ENCODE measurements at regions of chr1 and their contacts with region 1.

Region 1: GRCh38 chr1:93615582-93616150 is 66.0 kb downstream of the BCAR3 start:
- DNase-seq: peak; percentile 77
- ATAC-seq: peak; percentile 9
- H3K4me3 ChIP-seq: peak overlapping the region in 1 of 3 experiments; percentile 2; a peak in 1 of 6 replicates
- H3K27ac ChIP-seq: peak overlapping the region; percentile 100
- H3K4me1 ChIP-seq: peaks cover 87% of the 10 kb centered on the region
- H3K27me3 ChIP-seq: no peaks in the 10 kb centered on the region
- CTCF ChIP-seq: no peak; the same call in 1 of the 2 replicates
- EP300 ChIP-seq: peak in 1 of 2 experiments; percentile 51; a peak in 2 of 4 replicates
- POLR2A ChIP-seq: no peak; a peak in 1 of 4 replicates
- RAD21 ChIP-seq: no peak

Region 2: DNA sequence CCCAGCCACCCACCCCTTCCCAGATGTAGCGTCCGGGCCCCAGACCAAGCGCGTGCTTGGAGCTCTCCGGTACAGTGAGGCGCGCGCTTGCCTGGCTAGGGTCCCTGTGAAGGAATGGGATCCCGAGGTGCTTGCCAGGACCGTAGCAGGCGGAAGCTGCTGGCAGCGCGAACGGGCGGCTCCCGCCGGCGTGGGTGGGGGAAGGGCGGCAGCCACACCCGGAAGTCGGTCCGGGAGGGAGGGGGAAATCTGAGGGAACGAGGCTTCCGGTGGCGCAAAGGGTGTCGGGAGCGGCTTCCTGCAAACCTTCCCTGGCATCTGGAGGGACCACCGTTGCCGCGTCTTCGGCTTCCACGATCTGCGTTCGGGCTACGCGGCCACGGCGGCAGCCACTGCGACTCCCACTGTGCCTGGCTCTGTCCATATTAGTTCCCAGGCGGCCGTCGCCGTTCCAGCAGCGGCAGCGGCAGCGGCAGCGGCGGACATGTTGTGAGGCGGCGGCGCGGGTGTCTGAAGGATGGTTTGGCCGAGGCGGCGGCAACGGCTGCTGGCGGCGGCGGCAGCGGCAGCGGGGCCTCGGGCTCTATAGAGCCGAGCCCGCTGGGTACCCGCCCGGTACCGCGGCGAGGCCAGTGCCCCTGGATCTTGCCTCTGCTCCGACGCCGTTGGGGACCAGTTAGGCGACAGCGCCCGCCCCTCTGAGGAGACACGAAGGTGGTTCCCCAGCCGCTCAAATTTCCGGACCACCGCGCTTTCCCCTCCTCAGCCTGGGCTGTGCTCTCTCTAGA is 269.8 kb before region 1 on chr1 and contains the start of gene DR1:
- CTCF ChIA-PET with region 1: no interaction called
- POLR2A ChIA-PET with region 1: interaction called, 19 read pairs
- in situ Hi-C with region 1: no loop called
- intact Hi-C with region 1: loop called (anchors 5 kb)
- DNase-seq: peak; percentile 85
- ATAC-seq: peak; percentile 94
- H3K4me3 ChIP-seq: peak within 1 kb of the TSS; percentile 81 to 99 (median 93)
- H3K27ac ChIP-seq: peak within 1 kb of the TSS; percentile 94
- H3K4me1 ChIP-seq: peaks cover 35% of the 10 kb centered on the region
- H3K27me3 ChIP-seq: no peaks in the 10 kb centered on the region; a peak in 1 of 5 replicates
- CTCF ChIP-seq: no peak; the same call in 1 of the 2 replicates
- EP300 ChIP-seq: peak in 1 of 2 experiments; percentile 70; a peak in 2 of 4 replicates
- POLR2A ChIP-seq: peak; percentile 89 to 92
- RAD21 ChIP-seq: peak; percentile 45; the same call in 1 of the 2 replicates
- total RNA-seq, gene DR1: 42.3 and 54.7 TPM in 2 replicates

Region 3: GRCh38 chr1:93447516-93448291 is 168.0 kb before region 1 on chr1 and contains the start of gene FNBP1L:
- CTCF ChIA-PET with region 1: no interaction called
- POLR2A ChIA-PET with region 1: interaction called, 30 read pairs
- in situ Hi-C with region 1: loop called (anchors 5 kb)
- intact Hi-C with region 1: loop called (anchors 2 kb)
- DNase-seq: peak; percentile 65
- ATAC-seq: peak; percentile 90
- H3K4me3 ChIP-seq: peak within 1 kb of the TSS; percentile 87 to 99 (median 99)
- H3K27ac ChIP-seq: peak within 1 kb of the TSS; percentile 90
- H3K4me1 ChIP-seq: peaks cover 31% of the 10 kb centered on the region
- H3K27me3 ChIP-seq: no peaks in the 10 kb centered on the region; a peak in 1 of 5 replicates
- CTCF ChIP-seq: no peak
- EP300 ChIP-seq: no peak
- POLR2A ChIP-seq: peak; percentile 72 to 85
- RAD21 ChIP-seq: no peak
- total RNA-seq, gene FNBP1L: 27.1 and 41.3 TPM in 2 replicates

Region 4: GRCh38 chr1:93579891-93580290 is 35.8 kb before region 1 on chr1:
- CTCF ChIA-PET with region 1: no interaction called
- POLR2A ChIA-PET with region 1: interaction called, 56 read pairs
- in situ Hi-C with region 1: no loop called
- intact Hi-C with region 1: no loop called
- DNase-seq: peak; percentile 64
- ATAC-seq: peak; percentile 82
- H3K4me3 ChIP-seq: no peak overlapping the region
- H3K27ac ChIP-seq: peak overlapping the region; percentile 50
- H3K4me1 ChIP-seq: peaks cover 45% of the 10 kb centered on the region
- H3K27me3 ChIP-seq: no peaks in the 10 kb centered on the region
- CTCF ChIP-seq: no peak
- EP300 ChIP-seq: no peak
- POLR2A ChIP-seq: no peak
- RAD21 ChIP-seq: no peak

Region 5: GRCh38 chr1:93597709-93598108 is 18.0 kb before region 1 on chr1:
- CTCF ChIA-PET with region 1: no interaction called
- POLR2A ChIA-PET with region 1: interaction called, 214 read pairs
- in situ Hi-C with region 1: no loop called
- intact Hi-C with region 1: loop called (anchors 1 kb)
- DNase-seq: no peak
- ATAC-seq: no peak
- H3K4me3 ChIP-seq: no peak overlapping the region
- H3K27ac ChIP-seq: no peak overlapping the region
- H3K4me1 ChIP-seq: peaks cover 77% of the 10 kb centered on the region
- H3K27me3 ChIP-seq: no peaks in the 10 kb centered on the region
- CTCF ChIP-seq: no peak
- EP300 ChIP-seq: no peak
- POLR2A ChIP-seq: no peak
- RAD21 ChIP-seq: no peak

Region 6: DNA sequence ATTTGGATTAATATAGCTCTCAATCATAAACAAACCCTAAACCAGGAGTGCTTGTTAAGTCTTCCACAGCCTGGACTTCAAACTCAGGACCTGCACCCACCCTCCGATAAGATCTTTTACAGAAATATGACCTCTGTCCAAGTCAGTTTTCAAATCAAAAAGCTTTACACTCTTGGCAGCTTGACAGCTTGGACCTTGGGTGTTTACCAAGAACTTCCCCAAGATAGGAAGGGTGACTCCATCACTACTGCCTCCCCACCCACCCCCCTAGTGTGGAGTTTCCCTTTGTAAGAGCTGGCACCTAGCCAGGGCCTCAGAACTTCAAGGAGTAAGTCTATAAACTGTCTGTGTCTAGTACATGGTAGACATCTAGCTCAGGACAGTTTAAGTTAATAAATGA is 56.4 kb after region 1 on chr1:
- CTCF ChIA-PET with region 1: no interaction called
- POLR2A ChIA-PET with region 1: interaction called, 10 read pairs
- in situ Hi-C with region 1: no loop called
- intact Hi-C with region 1: no loop called
- DNase-seq: no peak
- ATAC-seq: peak; percentile 21; the same call in 1 of the 3 replicates
- H3K4me3 ChIP-seq: no peak overlapping the region
- H3K27ac ChIP-seq: peak overlapping the region; percentile 50
- H3K4me1 ChIP-seq: peaks cover 77% of the 10 kb centered on the region
- H3K27me3 ChIP-seq: no peaks in the 10 kb centered on the region
- CTCF ChIP-seq: no peak
- EP300 ChIP-seq: peak in 1 of 2 experiments; percentile 65; a peak in 2 of 4 replicates
- POLR2A ChIP-seq: no peak
- RAD21 ChIP-seq: no peak

Region 7: DNA sequence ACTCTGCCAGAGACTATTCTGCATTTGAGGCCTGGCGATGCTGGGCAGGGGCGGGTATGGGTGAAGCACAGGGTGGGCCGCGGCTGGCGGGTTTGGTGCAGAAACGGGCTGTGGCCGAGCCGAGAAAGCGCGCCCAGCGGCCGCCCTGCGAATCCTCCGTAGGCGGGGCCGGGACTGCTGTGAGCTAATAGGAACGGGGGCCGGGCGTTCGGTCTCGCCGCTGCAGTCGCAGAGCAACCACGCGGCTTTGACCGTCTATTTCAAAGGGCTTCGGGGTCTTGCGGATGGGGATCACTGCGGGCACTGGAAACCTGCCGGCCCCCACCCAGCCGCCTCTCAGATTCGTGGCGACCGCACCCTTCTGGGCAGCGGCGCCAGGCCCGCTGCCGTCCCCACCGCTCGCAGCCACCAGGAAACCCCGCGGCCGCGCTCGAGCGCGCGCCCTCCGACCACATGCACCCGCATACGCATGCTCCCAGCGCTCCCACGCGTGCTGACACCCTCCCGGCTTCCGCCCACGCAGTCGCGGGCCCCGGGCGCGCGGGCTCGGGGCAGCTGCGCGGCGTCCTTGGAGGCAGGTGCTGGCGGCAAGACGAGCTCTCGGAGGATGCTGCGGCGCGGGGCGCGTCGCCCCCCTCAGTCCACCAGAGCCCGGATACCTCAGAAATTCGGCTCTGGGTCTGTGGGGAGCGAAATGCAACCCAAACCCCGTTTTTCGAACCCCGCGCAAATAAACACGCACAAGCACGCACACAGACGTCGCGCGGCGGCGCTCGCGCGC is 230.7 kb after region 1 on chr1:
- CTCF ChIA-PET with region 1: no interaction called
- POLR2A ChIA-PET with region 1: interaction called, 55 read pairs
- in situ Hi-C with region 1: no loop called
- intact Hi-C with region 1: loop called (anchors 5 kb)
- DNase-seq: peak; percentile 76
- ATAC-seq: peak; percentile 83
- H3K4me3 ChIP-seq: peak overlapping the region; percentile 90 to 91 (median 91)
- H3K27ac ChIP-seq: peak overlapping the region; percentile 88
- H3K4me1 ChIP-seq: peaks cover 20% of the 10 kb centered on the region
- H3K27me3 ChIP-seq: no peaks in the 10 kb centered on the region; a peak in 1 of 5 replicates
- CTCF ChIP-seq: peak; percentile 56
- EP300 ChIP-seq: no peak
- POLR2A ChIP-seq: peak; percentile 69 to 77
- RAD21 ChIP-seq: no peak; the same call in 1 of the 2 replicates